ENCODE measurements at regions of chr19 and their contacts with region 1.

Region 1: GRCh38 chr19:18865973-18866799 is 29.8 kb downstream of the CERS1 start:
- DNase-seq: peak; percentile 98
- H3K4me3 ChIP-seq: peak overlapping the region in 1 of 2 experiments; percentile 53; a peak in 1 of 4 replicates
- H3K27ac ChIP-seq: no peak overlapping the region
- H3K4me1 ChIP-seq: no peaks in the 10 kb centered on the region
- H3K27me3 ChIP-seq: no peaks in the 10 kb centered on the region
- CTCF ChIP-seq: peak; percentile 99
- EP300 ChIP-seq: no peak
- RAD21 ChIP-seq: peak; percentile 74

Region 2: GRCh38 chr19:18831524-18832305 is 34.5 kb before region 1 on chr19 and contains the start of gene UPF1:
- CTCF ChIA-PET with region 1: interaction called, 12 read pairs
- POLR2A ChIA-PET with region 1: no interaction called
- DNase-seq: peak; percentile 97
- H3K4me3 ChIP-seq: peak within 1 kb of the TSS; percentile 83 to 89
- H3K27ac ChIP-seq: peak within 1 kb of the TSS; percentile 54 to 80; a peak in 3 of 4 replicates
- H3K4me1 ChIP-seq: peaks cover 7 to 18% of the 10 kb centered on the region in 2 experiments; a peak in 3 of 4 replicates
- H3K27me3 ChIP-seq: no peaks in the 10 kb centered on the region
- CTCF ChIP-seq: no peak
- EP300 ChIP-seq: no peak
- RAD21 ChIP-seq: 0 out of 2 replicates have a peak, but pooled peaks have one; percentile 5
- polyA plus RNA-seq, gene UPF1: 20.3 and 33.3 TPM in 2 replicates

Region 3: DNA sequence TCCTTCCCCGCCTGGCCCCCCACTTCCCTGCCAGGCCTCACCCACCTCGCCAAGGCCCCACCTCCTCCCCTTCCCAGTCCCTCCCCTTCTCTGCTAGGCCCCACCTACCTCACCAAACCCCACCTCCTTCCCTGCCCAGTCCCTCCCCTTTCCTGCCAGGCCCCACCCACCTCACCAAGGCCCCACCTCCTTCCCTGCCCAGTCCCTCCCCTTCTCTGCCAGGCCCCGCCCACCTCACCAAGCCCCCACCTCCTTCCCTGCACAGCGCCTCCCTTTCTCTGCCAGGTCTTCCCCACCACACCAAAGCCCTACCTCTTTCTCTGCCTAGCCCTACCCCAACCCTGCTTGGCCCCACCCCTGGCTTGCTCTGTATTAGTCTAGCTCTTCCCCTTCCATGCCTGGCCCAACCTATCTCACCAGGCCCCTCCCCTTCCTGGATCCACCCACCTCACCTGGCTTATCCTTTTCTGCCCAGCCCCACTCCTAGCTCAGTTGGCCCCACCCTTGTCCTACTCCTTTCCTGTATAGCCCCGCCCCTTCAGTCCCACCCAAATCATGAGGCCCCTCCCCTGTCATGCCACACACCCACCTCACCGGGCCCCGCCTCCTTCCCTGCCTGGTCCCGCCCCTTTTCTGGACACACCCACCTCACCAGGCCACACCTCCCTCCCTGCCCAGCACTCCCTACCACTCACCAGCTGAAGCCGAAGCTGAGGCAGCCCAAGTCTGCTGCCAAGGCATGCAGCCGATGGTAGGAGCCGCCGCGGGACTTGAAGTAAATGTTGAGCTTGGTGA is 13.6 kb after region 1 on chr19:
- CTCF ChIA-PET with region 1: interaction called, 38 read pairs
- POLR2A ChIA-PET with region 1: no interaction called
- DNase-seq: peak; percentile 88
- H3K4me3 ChIP-seq: no peak overlapping the region
- H3K27ac ChIP-seq: no peak overlapping the region
- H3K4me1 ChIP-seq: no peaks in the 10 kb centered on the region
- H3K27me3 ChIP-seq: no peaks in the 10 kb centered on the region
- CTCF ChIP-seq: no peak
- EP300 ChIP-seq: no peak
- RAD21 ChIP-seq: no peak

Region 4: DNA sequence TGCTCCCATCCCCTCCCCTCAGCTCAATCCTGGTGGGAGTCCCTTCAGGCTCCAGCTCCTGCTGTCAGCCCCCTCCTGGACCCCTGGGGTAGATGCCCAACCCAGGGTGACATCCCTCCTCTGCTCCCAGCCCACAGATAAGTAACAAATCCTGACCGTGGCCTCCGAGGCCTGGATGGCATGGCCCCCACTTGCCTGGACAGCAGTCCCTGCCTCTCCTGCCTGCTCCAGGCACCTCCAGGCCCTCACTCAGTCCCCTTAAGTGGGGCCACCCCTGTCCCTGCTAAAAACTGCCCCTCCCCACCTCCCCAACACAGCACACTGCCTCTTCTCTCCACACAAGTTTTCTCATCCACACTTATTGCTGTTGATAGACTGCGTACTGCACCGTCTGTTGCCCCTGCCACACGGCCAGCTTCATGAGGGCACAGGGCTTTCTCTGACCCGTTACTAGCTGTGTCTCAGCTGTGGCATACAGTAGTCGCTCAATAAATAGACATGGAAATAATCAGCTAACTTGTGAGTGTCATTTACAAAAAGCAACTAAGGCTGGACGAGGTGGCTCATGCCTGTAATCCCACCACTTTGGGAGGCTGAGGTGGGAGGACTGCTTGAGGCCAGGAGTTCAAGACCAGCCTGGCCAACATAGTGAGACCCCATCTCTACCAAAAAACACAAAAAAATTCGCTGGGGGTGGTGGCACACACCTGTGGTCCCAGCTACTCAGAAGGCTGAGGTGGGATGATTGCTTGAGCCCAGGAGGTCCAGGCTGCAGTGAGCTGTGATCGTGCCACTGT is 24.0 kb after region 1 on chr19:
- CTCF ChIA-PET with region 1: interaction called, 21 read pairs
- POLR2A ChIA-PET with region 1: interaction called, 3 read pairs
- DNase-seq: no peak
- H3K4me3 ChIP-seq: no peak overlapping the region
- H3K27ac ChIP-seq: no peak overlapping the region
- H3K4me1 ChIP-seq: peaks cover 0 to 14% of the 10 kb centered on the region in 2 experiments; a peak in 1 of 4 replicates
- H3K27me3 ChIP-seq: no peaks in the 10 kb centered on the region
- CTCF ChIP-seq: no peak
- EP300 ChIP-seq: no peak
- RAD21 ChIP-seq: no peak

Measured in SK-N-SH (cell line).